ENCODE measurements at regions of chr5 and their contacts with region 1.

Region 1: DNA sequence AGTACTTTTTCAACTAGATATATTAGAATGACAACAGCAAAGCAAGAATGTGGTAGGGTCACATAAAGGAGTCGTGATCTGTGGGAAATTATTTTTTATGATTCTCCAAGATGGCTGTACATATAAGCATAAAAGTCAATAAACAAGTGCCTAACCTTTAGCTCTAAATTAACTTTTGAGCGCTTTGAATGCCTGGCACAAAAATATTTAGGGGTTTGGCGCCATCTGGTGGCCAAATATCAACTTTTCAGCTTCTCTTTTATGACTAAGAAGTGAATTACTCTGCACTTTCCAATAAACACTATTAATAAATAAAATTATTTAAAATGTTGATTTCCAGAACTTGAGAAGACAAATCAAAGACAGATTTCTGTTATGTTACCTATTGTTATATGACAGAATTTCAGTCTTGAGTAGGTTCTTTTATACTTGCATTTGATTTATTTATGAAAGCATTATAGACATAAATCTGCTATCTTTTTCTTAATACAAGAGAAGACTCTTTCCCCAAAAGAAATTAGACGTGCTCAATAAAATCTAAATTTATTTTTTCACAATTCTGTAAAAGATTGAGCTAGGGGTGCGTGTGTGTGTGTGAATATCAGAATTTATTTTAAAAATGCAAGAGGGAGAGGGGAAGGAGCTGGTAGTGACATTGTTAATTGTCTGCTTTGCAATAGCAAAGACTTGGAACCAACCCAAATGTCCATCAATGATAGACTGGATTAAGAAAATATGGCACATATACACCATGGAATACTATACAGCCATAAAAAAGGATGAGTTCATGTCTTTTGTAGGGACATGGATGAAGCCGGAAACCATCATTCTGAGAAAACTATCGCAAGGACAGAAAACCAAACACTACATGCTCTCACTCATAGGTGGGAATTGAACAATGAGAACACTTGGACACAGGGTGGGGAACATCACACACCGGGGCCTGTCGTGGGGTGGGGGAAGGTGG is 36.7 kb upstream of the ARRDC3 start:
- DNase-seq: peak; percentile 84
- ATAC-seq: peak; percentile 24
- H3K4me3 Mint-ChIP-seq: no peak overlapping the region
- H3K27ac Mint-ChIP-seq: no peak overlapping the region
- H3K4me1 Mint-ChIP-seq: peaks cover 18% of the 10 kb centered on the region
- H3K27me3 Mint-ChIP-seq: no peaks in the 10 kb centered on the region
- CTCF ChIP-seq: peak; percentile 89

Region 2: GRCh38 chr5:90932052-90932699 is 487.7 kb before region 1 on chr5:
- CTCF ChIA-PET with region 1: interaction called, 31 read pairs
- POLR2A ChIA-PET with region 1: no interaction called
- intact Hi-C with region 1: loop called (anchors 10 kb)
- DNase-seq: peak; percentile 33
- ATAC-seq: peak; percentile 42
- H3K4me3 Mint-ChIP-seq: no peak overlapping the region
- H3K27ac Mint-ChIP-seq: no peak overlapping the region
- H3K4me1 Mint-ChIP-seq: peaks cover 2% of the 10 kb centered on the region
- H3K27me3 Mint-ChIP-seq: peaks cover 4% of the 10 kb centered on the region
- CTCF ChIP-seq: peak; percentile 89

Region 3: DNA sequence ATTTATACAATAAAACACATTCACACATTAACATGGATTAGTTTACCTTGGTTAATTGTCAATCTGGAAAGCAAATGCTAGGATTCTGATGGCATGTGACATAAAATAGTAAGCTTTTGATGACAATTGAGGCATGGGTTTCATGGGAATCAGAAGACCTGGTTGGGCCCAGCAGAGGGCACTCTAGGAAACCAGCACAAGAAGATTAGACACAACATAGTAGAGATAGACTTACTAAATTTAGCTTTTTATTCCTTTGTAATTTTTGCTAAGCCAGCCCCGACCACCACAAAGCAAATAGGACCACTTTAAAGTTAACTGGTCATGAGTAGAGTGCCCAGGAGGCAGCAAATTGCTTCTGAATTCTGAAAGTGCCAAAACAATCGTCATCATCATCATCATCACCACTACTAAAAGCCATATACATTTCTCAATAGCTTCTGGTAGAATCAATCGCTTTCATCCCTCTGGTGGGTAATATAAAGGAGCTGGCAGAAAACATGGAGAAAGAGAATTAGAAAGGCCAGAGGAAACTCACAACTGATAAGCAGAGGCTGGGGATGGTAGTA is 200.0 kb before region 1 on chr5:
- CTCF ChIA-PET with region 1: interaction called, 45 read pairs
- POLR2A ChIA-PET with region 1: no interaction called
- intact Hi-C with region 1: loop called (anchors 1 kb)
- DNase-seq: peak; percentile 62
- ATAC-seq: peak; percentile 47
- H3K4me3 Mint-ChIP-seq: no peak overlapping the region
- H3K27ac Mint-ChIP-seq: no peak overlapping the region
- H3K4me1 Mint-ChIP-seq: no peaks in the 10 kb centered on the region
- H3K27me3 Mint-ChIP-seq: no peaks in the 10 kb centered on the region
- CTCF ChIP-seq: peak; percentile 58

Region 4: GRCh38 chr5:91403438-91403837 is 16.4 kb before region 1 on chr5:
- CTCF ChIA-PET with region 1: interaction called, 50 read pairs
- POLR2A ChIA-PET with region 1: no interaction called
- intact Hi-C with region 1: no loop called
- DNase-seq: no peak
- ATAC-seq: no peak
- H3K4me3 Mint-ChIP-seq: no peak overlapping the region
- H3K27ac Mint-ChIP-seq: no peak overlapping the region
- H3K4me1 Mint-ChIP-seq: no peaks in the 10 kb centered on the region
- H3K27me3 Mint-ChIP-seq: no peaks in the 10 kb centered on the region
- CTCF ChIP-seq: no peak

Region 5: DNA sequence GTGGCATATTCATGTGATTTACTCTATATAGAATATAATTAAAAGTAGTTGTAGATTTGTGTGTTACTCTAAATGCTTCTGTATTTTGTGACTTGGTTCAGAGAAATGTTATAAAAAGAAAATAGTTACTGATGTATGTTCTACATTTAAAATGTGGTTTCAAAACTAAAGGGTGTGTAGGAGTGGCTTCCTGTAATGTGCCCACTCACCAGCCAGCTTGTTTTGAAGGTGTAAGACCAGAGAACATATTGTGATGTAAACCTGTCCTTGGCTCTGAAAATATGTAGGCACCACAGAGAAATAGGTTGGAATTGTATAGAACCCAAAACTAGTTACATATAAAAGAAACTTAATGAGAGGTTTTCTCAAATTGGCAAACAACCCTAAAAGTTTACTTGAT is 14.5 kb after region 1 on chr5:
- CTCF ChIA-PET with region 1: interaction called, 53 read pairs
- POLR2A ChIA-PET with region 1: no interaction called
- intact Hi-C with region 1: no loop called
- DNase-seq: peak; percentile 39
- ATAC-seq: peak; percentile 67
- H3K4me3 Mint-ChIP-seq: no peak overlapping the region
- H3K27ac Mint-ChIP-seq: peak overlapping the region; percentile 82
- H3K4me1 Mint-ChIP-seq: peaks cover 31% of the 10 kb centered on the region
- H3K27me3 Mint-ChIP-seq: no peaks in the 10 kb centered on the region
- CTCF ChIP-seq: no peak

Region 6: DNA sequence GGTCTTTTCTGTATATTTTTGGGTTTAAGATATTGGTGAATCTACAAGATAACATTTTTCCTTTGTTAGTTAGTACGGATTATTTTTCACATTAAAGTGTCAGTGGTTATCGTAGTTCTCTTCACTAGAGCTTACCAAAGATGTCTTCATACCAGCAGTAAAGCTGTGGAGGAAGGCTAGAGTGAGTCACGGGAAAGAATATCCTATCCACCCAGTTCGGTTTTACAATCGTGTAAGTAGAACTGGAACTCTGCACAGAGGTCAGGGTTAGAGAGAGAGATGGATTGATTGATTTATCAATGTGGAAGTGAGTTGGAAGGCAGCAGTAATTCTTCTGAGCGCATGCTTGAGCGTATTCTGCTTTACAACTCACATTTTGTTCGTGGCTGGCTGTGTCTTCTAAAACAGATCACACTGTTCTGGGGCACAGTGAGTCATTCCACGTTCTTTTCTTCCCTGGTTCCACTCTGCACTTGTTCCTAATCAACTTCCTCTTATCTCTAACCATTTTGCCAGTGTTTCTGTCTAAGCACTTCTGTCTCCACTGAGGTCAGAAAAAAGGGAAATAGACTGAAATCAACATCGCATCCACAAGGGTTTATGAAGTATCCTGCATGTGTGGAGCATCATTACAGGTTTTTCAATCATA is 49.8 kb after region 1 on chr5:
- CTCF ChIA-PET with region 1: no interaction called
- POLR2A ChIA-PET with region 1: no interaction called
- intact Hi-C with region 1: no loop called
- DNase-seq: no peak
- ATAC-seq: no peak
- H3K4me3 Mint-ChIP-seq: no peak overlapping the region
- H3K27ac Mint-ChIP-seq: peak overlapping the region; percentile 19
- H3K4me1 Mint-ChIP-seq: peaks cover 15% of the 10 kb centered on the region
- H3K27me3 Mint-ChIP-seq: no peaks in the 10 kb centered on the region
- CTCF ChIP-seq: no peak

Region 7: GRCh38 chr5:91499943-91500531 is 80.2 kb after region 1 on chr5:
- CTCF ChIA-PET with region 1: interaction called, 10 read pairs
- POLR2A ChIA-PET with region 1: no interaction called
- intact Hi-C with region 1: no loop called
- DNase-seq: no peak
- ATAC-seq: no peak
- H3K4me3 Mint-ChIP-seq: no peak overlapping the region
- H3K27ac Mint-ChIP-seq: no peak overlapping the region
- H3K4me1 Mint-ChIP-seq: peaks cover 3% of the 10 kb centered on the region
- H3K27me3 Mint-ChIP-seq: no peaks in the 10 kb centered on the region
- CTCF ChIP-seq: peak; percentile 74